Endothelial cell of umbilical vein (primary cell): ENCODE measurements at regions of chr16 and their contacts with region 1.

Region 1: GRCh38 chr16:12819126-12820117 is 15.7 kb upstream of the CPPED1 start:
- DNase-seq: peak; percentile 60
- H3K4me3 ChIP-seq: no peak overlapping the region
- H3K27ac ChIP-seq: no peak overlapping the region
- H3K4me1 ChIP-seq: no peaks in the 10 kb centered on the region
- H3K27me3 ChIP-seq: peaks cover 0 to 2% of the 10 kb centered on the region in 2 experiments
- CTCF ChIP-seq: peak; percentile 83 to 88
- POLR2A ChIP-seq: no peak

Region 2: GRCh38 chr16:12340151-12340733 is 479.2 kb before region 1 on chr16:
- CTCF ChIA-PET with region 1: no interaction called
- POLR2A ChIA-PET with region 1: no interaction called
- dilution Hi-C with region 1: no loop called
- intact Hi-C with region 1: loop called (anchors 5 kb)
- DNase-seq: peak; percentile 47
- H3K4me3 ChIP-seq: no peak overlapping the region
- H3K27ac ChIP-seq: no peak overlapping the region
- H3K4me1 ChIP-seq: peaks cover 17% of the 10 kb centered on the region
- H3K27me3 ChIP-seq: no peaks in the 10 kb centered on the region
- CTCF ChIP-seq: peak; percentile 45 to 46
- POLR2A ChIP-seq: no peak

Region 3: DNA sequence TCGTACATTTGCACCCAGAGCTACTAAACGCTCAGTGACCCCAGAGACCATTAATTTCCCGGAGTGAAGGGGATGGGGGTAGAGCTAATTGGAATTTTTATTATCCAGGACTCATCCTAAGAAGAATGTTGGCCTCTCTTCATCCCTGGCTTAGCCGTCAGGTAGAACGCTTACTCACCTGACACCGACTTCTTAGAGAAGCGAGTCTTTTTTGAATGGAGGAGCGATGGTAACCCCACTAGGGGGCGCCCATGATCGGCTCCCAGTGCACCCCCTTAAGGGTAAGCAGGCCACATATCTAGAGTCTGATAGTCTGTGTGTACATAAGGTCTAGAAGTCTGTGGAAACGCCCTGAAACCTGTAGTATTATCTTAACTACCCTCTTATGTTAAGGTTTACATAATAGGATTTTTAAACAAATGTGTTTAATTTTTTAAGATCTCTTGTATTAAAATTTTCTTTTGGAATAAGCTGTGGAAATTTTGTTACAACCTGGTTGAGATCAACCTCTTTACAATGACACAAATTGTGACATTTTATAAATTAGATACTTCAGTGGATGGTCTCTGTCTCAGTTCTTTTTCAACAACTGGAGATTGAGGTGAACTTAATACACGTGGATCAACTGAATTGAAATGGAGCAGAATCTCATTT is 245.6 kb before region 1 on chr16:
- CTCF ChIA-PET with region 1: interaction called, 150 read pairs
- POLR2A ChIA-PET with region 1: no interaction called
- dilution Hi-C with region 1: no loop called
- intact Hi-C with region 1: loop called (anchors 1 kb)
- DNase-seq: peak; percentile 79
- H3K4me3 ChIP-seq: no peak overlapping the region
- H3K27ac ChIP-seq: no peak overlapping the region
- H3K4me1 ChIP-seq: no peaks in the 10 kb centered on the region
- H3K27me3 ChIP-seq: no peaks in the 10 kb centered on the region
- CTCF ChIP-seq: peak; percentile 78 to 81
- POLR2A ChIP-seq: no peak

Region 4: GRCh38 chr16:12729448-12729847 is 90.0 kb before region 1 on chr16:
- CTCF ChIA-PET with region 1: interaction called, 4 read pairs
- POLR2A ChIA-PET with region 1: no interaction called
- dilution Hi-C with region 1: no loop called
- intact Hi-C with region 1: loop called (anchors 5 kb)
- DNase-seq: peak; percentile 94
- H3K4me3 ChIP-seq: no peak overlapping the region
- H3K27ac ChIP-seq: peak overlapping the region; percentile 96
- H3K4me1 ChIP-seq: peaks cover 21% of the 10 kb centered on the region
- H3K27me3 ChIP-seq: no peaks in the 10 kb centered on the region
- CTCF ChIP-seq: no peak
- POLR2A ChIP-seq: no peak